T-cell (primary cell): ENCODE measurements at regions of chrX and their contacts with region 1.

Region 1: DNA sequence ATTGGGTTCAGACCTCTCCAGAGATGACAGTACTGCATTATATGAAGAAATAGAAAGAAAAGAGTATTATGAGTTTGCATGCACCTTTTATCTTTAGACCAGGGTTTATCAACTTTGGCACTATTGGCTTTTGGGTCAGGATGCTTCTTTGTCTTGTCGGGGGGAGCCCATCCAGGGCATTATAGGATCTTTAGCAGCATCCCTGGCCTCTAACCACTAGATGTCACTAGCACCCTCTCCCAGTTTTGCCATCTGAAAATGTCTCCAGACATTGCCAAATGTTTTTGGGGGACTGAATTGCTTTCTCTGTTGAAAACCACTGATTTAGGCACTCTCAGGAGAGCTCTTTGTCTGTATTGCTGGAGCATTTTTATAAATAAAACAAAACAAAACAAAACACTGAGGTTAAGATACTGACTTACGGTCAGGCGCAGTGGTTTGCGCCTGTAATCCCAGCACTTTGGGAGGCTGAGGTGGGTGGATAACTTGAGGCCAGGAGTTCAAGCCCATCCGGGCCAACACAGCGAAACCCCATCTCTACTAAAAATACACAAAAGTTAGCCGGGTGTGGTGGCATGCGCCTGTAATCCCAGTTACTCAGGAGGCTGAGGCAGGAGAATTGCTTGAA is 23.6 kb downstream of the CA5B start:
- DNase-seq: peak in 18 of 35 experiments; percentile 6 to 61 (median 22)
- ATAC-seq: peak in 3 of 4 experiments; percentile 54 to 59 (median 57)
- H3K4me3 ChIP-seq: no peak overlapping the region
- H3K4me3 Mint-ChIP-seq: no peak overlapping the region
- H3K27ac ChIP-seq: peak overlapping the region; percentile 34
- H3K27ac Mint-ChIP-seq: peak overlapping the region; percentile 71 to 79
- H3K4me1 ChIP-seq: peaks cover 9 to 35% of the 10 kb centered on the region in 2 experiments
- H3K4me1 Mint-ChIP-seq: peaks cover 36 to 46% (median 43%) of the 10 kb centered on the region in 3 donors
- H3K27me3 ChIP-seq: no peaks in the 10 kb centered on the region
- H3K27me3 Mint-ChIP-seq: no peaks in the 10 kb centered on the region

Region 2: DNA sequence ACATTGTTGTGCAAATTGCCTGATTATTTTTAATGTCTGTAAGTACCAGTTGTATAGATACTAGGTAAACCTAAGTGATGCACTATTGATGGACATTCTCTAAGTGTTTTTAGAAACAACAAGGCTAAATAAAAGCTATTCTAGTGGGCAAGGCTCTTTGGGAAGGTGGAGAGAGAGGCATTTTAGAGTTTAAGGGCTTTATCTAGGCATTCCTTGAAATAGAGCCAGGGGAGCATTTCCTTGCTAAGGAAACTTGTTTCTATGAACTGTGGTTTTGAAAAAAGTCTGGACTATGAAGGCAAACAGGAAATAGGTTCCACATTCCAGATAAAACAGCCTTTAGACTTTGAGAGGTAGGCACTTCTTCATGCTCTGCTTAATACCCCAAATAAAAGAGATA is 237.3 kb before region 1 on chrX:
- CTCF ChIA-PET with region 1: no interaction called
- POLR2A ChIA-PET with region 1: no interaction called
- DNase-seq: no peak
- ATAC-seq: no peak
- H3K4me3 ChIP-seq: no peak overlapping the region
- H3K4me3 Mint-ChIP-seq: no peak overlapping the region
- H3K27ac ChIP-seq: no peak overlapping the region
- H3K27ac Mint-ChIP-seq: no peak overlapping the region
- H3K4me1 ChIP-seq: no peaks in the 10 kb centered on the region
- H3K4me1 Mint-ChIP-seq: no peaks in the 10 kb centered on the region
- H3K27me3 ChIP-seq: peaks cover 0 to 2% of the 10 kb centered on the region in 2 experiments
- H3K27me3 Mint-ChIP-seq: peaks cover 4 to 54% of the 10 kb centered on the region in 2 donors

Region 3: DNA sequence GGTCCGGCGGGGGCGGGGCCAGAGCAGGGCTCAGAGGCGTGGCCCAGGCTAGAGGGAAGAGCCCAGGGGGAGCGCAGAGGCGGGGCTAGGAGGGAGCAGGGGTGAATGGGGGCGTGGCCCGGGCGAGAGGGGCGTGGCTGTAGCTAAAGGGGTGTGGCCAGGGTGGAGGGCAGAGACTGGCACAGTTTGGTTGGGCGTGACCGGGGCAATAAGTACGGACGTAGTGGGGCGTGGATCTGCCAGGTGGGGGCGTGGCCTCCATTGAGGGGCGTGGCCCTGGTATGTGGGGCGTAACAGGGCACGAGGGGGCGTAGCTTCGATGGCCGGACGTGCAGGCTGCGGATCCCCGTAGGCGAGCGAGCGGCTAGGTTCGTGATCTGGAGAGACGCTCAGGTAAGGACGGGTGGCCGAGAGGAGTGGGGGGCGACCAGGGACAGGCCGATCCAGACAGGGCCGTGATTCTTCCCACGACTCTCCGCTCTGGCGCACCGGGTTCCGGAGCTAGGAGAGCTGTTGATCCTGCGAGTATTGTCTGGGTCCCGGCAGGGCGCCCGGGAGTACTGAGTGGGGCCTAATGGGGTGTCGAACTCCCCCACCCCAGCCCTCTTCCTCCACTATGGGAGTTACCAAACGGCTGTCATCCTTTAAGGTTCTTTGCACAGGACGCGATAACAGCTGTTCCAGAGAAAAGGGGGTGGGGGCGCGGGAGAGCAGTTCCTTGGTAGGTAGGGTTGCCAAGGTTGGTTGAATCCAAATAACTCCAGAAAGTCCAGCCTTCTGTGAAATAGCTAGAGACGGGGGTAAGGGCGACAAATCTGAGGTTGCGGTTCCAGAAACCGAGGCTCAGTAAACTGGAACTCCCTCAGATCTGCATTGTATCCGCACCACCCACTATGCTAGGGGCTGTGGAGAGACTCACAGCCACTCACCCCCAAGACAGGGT is 23.4 kb before region 1 on chrX and contains the start of gene CA5B:
- CTCF ChIA-PET with region 1: interaction called, 11 to 19 read pairs
- POLR2A ChIA-PET with region 1: interaction called in 1 of 2 experiments, 16 read pairs
- DNase-seq: peak; percentile 86 to 100 (median 95)
- ATAC-seq: peak; percentile 92 to 96 (median 96)
- H3K4me3 ChIP-seq: peak within 1 kb of the TSS; percentile 66 to 91
- H3K4me3 Mint-ChIP-seq: peak within 1 kb of the TSS; percentile 90 to 91 (median 91)
- H3K27ac ChIP-seq: peak within 1 kb of the TSS; percentile 84
- H3K27ac Mint-ChIP-seq: peak within 1 kb of the TSS; percentile 82 to 84
- H3K4me1 ChIP-seq: peaks cover 13 to 35% of the 10 kb centered on the region in 2 experiments
- H3K4me1 Mint-ChIP-seq: peaks cover 48 to 55% (median 52%) of the 10 kb centered on the region in 3 donors
- H3K27me3 ChIP-seq: no peaks in the 10 kb centered on the region
- H3K27me3 Mint-ChIP-seq: no peaks in the 10 kb centered on the region
- total RNA-seq, gene CA5B: 34.2 to 80.9 (median 44.6) TPM

Region 4: GRCh38 chrX:15815779-15816437 is 54.2 kb after region 1 on chrX:
- CTCF ChIA-PET with region 1: no interaction called
- POLR2A ChIA-PET with region 1: no interaction called
- DNase-seq: peak in 19 of 35 experiments; percentile 0 to 55 (median 9)
- ATAC-seq: peak; percentile 54 to 77 (median 70)
- H3K4me3 ChIP-seq: no peak overlapping the region
- H3K4me3 Mint-ChIP-seq: no peak overlapping the region
- H3K27ac ChIP-seq: peak overlapping the region; percentile 41
- H3K27ac Mint-ChIP-seq: peak overlapping the region; percentile 66
- H3K4me1 ChIP-seq: peaks cover 17 to 20% of the 10 kb centered on the region in 2 experiments
- H3K4me1 Mint-ChIP-seq: peaks cover 33 to 46% (median 34%) of the 10 kb centered on the region in 3 donors
- H3K27me3 ChIP-seq: no peaks in the 10 kb centered on the region
- H3K27me3 Mint-ChIP-seq: no peaks in the 10 kb centered on the region

Region 5: DNA sequence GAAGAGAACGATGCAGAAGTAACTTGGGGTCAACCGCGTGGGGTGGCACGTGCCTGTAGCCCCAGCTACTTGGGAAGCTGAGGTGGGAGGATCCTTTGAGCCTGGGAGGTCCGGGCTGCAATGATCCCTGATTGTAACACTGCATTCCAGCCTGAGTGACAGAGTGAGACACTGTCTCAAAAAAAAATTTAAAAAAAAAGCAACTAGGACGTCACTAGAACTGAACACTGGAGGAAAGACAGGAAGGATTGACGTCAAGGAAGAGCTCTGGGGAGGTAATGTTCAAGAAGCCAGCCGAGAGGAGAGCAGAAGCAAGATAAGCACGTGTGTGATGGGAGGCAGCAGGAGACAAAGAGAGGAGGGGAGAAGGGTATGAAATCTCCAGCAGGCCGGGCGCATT is 917.0 kb after region 1 on chrX:
- CTCF ChIA-PET with region 1: interaction called in 1 of 2 experiments, 3 read pairs
- POLR2A ChIA-PET with region 1: interaction called in 1 of 2 experiments, 13 read pairs
- DNase-seq: no peak
- ATAC-seq: no peak
- H3K4me3 ChIP-seq: no peak overlapping the region
- H3K4me3 Mint-ChIP-seq: no peak overlapping the region
- H3K27ac ChIP-seq: no peak overlapping the region
- H3K27ac Mint-ChIP-seq: no peak overlapping the region
- H3K4me1 ChIP-seq: no peaks in the 10 kb centered on the region
- H3K4me1 Mint-ChIP-seq: no peaks in the 10 kb centered on the region
- H3K27me3 ChIP-seq: no peaks in the 10 kb centered on the region
- H3K27me3 Mint-ChIP-seq: peaks cover 0 to 3% of the 10 kb centered on the region in 2 donors